Sigmoid colon (tissue), 7 donors: ENCODE measurements at regions of chr12 and their contacts with region 1.

Region 1: GRCh38 chr12:14365294-14366208 is at the start of gene ATF7IP:
- DNase-seq: peak; percentile 98
- H3K4me3 ChIP-seq: peak within 1 kb of the TSS; percentile 61 to 69 (median 64)
- H3K27ac ChIP-seq: peak within 1 kb of the TSS; percentile 90 to 98 (median 93)
- H3K4me1 ChIP-seq: peaks cover 0 to 23% (median 8%) of the 10 kb centered on the region in 4 donors
- H3K27me3 ChIP-seq: no peaks in the 10 kb centered on the region
- CTCF ChIP-seq: peak in 2 of 4 experiments; percentile 6 to 16
- EP300 ChIP-seq: peak in 1 of 4 donors; percentile 7
- POLR2A ChIP-seq: peak; percentile 33 to 66
- total RNA-seq, gene ATF7IP: 27.7 to 58.4 (median 44.6) TPM

Region 2: GRCh38 chr12:14257734-14258574 is 107.6 kb before region 1 on chr12:
- intact Hi-C with region 1: loop called (anchors 1 kb)
- DNase-seq: peak; percentile 95
- H3K4me3 ChIP-seq: peak overlapping the region in 1 of 4 donors; percentile 20
- H3K27ac ChIP-seq: peak overlapping the region; percentile 79 to 91 (median 83)
- H3K4me1 ChIP-seq: peaks cover 5 to 56% (median 48%) of the 10 kb centered on the region in 4 donors
- H3K27me3 ChIP-seq: no peaks in the 10 kb centered on the region
- CTCF ChIP-seq: no peak
- EP300 ChIP-seq: peak in 3 of 4 donors; percentile 30 to 63 (median 54)
- POLR2A ChIP-seq: no peak

Region 3: GRCh38 chr12:14403711-14404196 is 38.2 kb after region 1 on chr12:
- intact Hi-C with region 1: loop called (anchors 5 kb)
- DNase-seq: no peak
- H3K4me3 ChIP-seq: no peak overlapping the region
- H3K27ac ChIP-seq: peak overlapping the region in 3 of 4 donors; percentile 34 to 55 (median 42)
- H3K4me1 ChIP-seq: peaks cover 0 to 41% (median 29%) of the 10 kb centered on the region in 4 donors
- H3K27me3 ChIP-seq: no peaks in the 10 kb centered on the region
- CTCF ChIP-seq: no peak
- EP300 ChIP-seq: no peak
- POLR2A ChIP-seq: no peak

Region 4: GRCh38 chr12:14567351-14568162 is 202.0 kb after region 1 on chr12 and contains the start of gene PLBD1:
- intact Hi-C with region 1: loop called (anchors 5 kb)
- DNase-seq: peak; percentile 85
- H3K4me3 ChIP-seq: peak within 1 kb of the TSS; percentile 50 to 68 (median 62)
- H3K27ac ChIP-seq: peak within 1 kb of the TSS; percentile 65 to 79 (median 74)
- H3K4me1 ChIP-seq: peaks cover 0 to 14% (median 10%) of the 10 kb centered on the region in 4 donors
- H3K27me3 ChIP-seq: no peaks in the 10 kb centered on the region
- CTCF ChIP-seq: no peak
- EP300 ChIP-seq: no peak
- POLR2A ChIP-seq: no peak
- total RNA-seq, gene PLBD1: 8.7 to 16.2 (median 11.8) TPM

Region 5: GRCh38 chr12:15505616-15506015 is 1140.1 kb after region 1 on chr12:
- intact Hi-C with region 1: no loop called
- DNase-seq: no peak
- H3K4me3 ChIP-seq: no peak overlapping the region
- H3K27ac ChIP-seq: peak overlapping the region in 2 of 4 donors; percentile 3 to 35
- H3K4me1 ChIP-seq: peaks cover 0 to 21% (median 13%) of the 10 kb centered on the region in 4 donors
- H3K27me3 ChIP-seq: no peaks in the 10 kb centered on the region
- CTCF ChIP-seq: no peak
- EP300 ChIP-seq: no peak
- POLR2A ChIP-seq: no peak